WTC11 (cell line): ENCODE measurements at regions of chr4 and their contacts with region 1.

Region 1: GRCh38 chr4:102578819-102579218 is 77.7 kb downstream of the NFKB1 start:
- DNase-seq: peak; percentile 72
- ATAC-seq: peak; percentile 99
- H3K4me3 Mint-ChIP-seq: peak overlapping the region; percentile 39
- H3K27ac Mint-ChIP-seq: no peak overlapping the region
- H3K4me1 Mint-ChIP-seq: peaks cover 17% of the 10 kb centered on the region
- H3K27me3 Mint-ChIP-seq: no peaks in the 10 kb centered on the region
- CTCF ChIP-seq: no peak

Region 2: DNA sequence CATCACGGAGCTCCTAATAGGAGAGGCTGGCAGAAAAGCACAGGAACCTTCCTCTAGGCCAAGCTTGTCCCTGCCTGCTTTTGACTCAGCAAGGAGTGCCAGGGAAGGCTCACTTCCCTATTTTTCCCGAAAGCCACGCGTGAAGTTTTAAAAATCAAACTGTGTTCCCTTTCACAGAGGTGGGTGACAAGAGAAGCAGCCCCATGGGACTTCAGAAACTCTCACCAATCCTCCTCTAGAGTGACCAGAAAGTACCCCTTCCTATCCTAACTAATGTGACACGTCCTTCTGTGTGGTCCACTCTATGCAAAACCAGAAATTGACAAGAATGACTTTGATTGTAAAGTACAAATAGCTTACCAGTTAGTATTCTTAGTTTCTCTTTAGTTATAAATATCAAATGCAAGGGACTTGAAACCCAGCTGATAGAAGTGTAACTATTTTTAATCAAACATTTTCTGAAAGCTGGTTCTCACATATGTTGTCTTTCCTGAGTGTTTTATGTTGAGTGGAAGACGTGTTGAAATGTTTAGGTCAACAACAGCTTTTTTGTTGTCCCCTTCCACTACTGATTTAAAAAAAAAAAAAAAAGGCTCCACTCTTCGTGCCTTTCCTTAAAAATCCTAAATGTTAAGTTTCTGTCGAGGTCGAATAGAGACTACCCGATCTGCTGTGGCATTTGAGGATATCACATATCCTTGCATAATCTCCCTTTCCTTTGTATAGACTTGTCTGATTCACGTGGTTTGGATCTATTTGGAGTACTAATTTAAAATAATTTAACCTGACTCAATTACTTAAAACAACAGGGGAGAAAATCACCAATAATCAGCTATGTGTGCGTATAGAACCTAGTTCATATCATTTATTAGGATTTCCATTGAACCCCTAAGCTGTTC is 35.5 kb before region 1 on chr4:
- CTCF ChIA-PET with region 1: interaction called, 10 read pairs
- POLR2A ChIA-PET with region 1: no interaction called
- DNase-seq: no peak
- ATAC-seq: no peak
- H3K4me3 Mint-ChIP-seq: no peak overlapping the region
- H3K27ac Mint-ChIP-seq: no peak overlapping the region
- H3K4me1 Mint-ChIP-seq: no peaks in the 10 kb centered on the region
- H3K27me3 Mint-ChIP-seq: no peaks in the 10 kb centered on the region
- CTCF ChIP-seq: no peak

Region 3: GRCh38 chr4:102610007-102610406 is 31.2 kb after region 1 on chr4:
- CTCF ChIA-PET with region 1: interaction called, 12 read pairs
- POLR2A ChIA-PET with region 1: no interaction called
- DNase-seq: no peak
- ATAC-seq: no peak
- H3K4me3 Mint-ChIP-seq: no peak overlapping the region
- H3K27ac Mint-ChIP-seq: no peak overlapping the region
- H3K4me1 Mint-ChIP-seq: peaks cover 20% of the 10 kb centered on the region
- H3K27me3 Mint-ChIP-seq: no peaks in the 10 kb centered on the region
- CTCF ChIP-seq: no peak

Region 4: GRCh38 chr4:102625232-102625930 is 46.6 kb after region 1 on chr4:
- CTCF ChIA-PET with region 1: interaction called, 31 read pairs
- POLR2A ChIA-PET with region 1: no interaction called
- DNase-seq: peak; percentile 46
- ATAC-seq: peak; percentile 85
- H3K4me3 Mint-ChIP-seq: no peak overlapping the region
- H3K27ac Mint-ChIP-seq: no peak overlapping the region
- H3K4me1 Mint-ChIP-seq: peaks cover 20% of the 10 kb centered on the region
- H3K27me3 Mint-ChIP-seq: no peaks in the 10 kb centered on the region
- CTCF ChIP-seq: no peak

Region 5: DNA sequence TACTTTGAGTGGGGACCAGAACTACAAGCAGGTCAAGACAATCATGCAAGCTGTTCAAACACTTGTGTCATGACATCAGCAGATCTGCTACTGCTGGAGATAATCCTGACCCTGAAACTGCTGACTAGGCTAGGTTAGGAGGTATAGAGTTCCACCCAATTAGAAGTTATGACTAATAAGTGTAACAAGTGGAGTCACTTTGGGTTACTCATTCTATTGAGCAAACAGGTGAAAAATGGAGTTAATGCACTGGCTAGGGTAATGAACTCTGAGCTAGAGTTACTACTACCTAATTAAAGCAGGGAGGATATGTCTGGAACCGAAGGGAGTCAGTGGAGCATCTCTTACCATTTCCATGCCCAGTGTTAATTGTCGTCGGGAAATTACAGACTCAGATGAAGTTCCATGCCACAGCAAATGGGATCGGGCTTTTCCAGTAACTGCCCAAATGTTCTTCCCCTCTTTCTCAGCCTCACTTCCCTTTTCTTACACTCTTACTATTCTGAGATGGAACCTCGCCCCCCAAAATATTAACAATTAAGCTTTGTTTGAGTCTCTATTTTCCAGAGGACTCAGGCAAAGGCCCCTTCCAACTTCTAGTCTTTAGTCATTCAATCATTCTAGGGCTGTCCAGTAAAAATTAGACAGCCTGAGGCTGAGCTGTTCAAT is 201.8 kb after region 1 on chr4:
- CTCF ChIA-PET with region 1: no interaction called
- POLR2A ChIA-PET with region 1: no interaction called
- DNase-seq: no peak
- ATAC-seq: no peak
- H3K4me3 Mint-ChIP-seq: no peak overlapping the region
- H3K27ac Mint-ChIP-seq: no peak overlapping the region
- H3K4me1 Mint-ChIP-seq: 0 out of 2 replicates have a peak, but pooled peaks cover 3% of the 10 kb centered on the region
- H3K27me3 Mint-ChIP-seq: peaks cover 2% of the 10 kb centered on the region
- CTCF ChIP-seq: no peak

Region 6: DNA sequence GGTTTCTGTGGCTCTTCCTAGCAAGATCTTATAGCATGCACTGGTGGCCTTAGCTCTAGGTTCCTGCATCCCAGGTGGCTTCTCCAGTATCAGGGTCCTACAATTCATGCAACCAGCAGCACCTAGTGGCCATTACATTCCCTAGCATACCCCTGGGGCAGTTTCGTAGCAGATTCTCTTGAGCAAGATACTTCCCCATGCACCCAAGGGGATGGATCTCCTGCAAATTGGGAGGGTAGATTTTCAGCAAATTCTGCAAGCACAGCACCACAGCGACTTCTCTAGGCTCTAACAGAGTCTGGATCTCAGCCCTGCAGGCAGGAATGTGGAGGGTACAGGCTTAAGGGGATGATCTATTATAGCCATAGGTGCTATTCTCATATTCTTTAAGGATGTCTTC is 453.8 kb after region 1 on chr4:
- CTCF ChIA-PET with region 1: interaction called, 15 read pairs
- POLR2A ChIA-PET with region 1: no interaction called
- DNase-seq: peak; percentile 60
- ATAC-seq: peak; percentile 100
- H3K4me3 Mint-ChIP-seq: no peak overlapping the region
- H3K27ac Mint-ChIP-seq: no peak overlapping the region
- H3K4me1 Mint-ChIP-seq: no peaks in the 10 kb centered on the region
- H3K27me3 Mint-ChIP-seq: no peaks in the 10 kb centered on the region; the same call in 1 of the 2 replicates
- CTCF ChIP-seq: peak; percentile 67; the same call in 1 of the 2 replicates